Heart right ventricle (tissue), 16 donors: ENCODE measurements at regions of chr14 and their contacts with region 1.

Region 1: DNA sequence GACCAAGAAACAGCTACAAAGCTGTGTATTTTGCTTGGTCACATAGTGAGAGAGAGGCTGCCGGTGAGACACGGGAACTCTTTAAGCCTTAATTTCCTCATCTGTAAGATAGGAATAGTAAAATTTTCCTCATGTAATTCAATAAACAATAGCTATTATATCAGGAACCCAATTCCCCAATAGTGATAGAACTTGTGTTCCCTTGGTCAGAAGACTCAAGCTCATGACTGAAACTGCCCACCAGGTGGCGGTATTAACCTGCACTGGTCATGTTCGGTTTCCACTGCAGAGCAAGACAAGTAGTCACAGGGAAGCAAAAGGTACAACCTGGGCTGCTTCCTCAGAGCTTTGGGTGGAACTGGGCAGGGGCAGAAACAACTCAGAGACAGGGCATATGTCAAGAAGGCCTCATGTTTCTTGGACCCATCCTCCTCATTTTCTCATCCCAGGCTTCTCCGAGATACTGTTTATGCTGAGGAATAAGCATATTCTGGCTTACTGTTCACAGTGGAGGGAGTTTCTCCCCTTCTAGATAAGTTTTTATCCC is 4.2 kb upstream of the AJUBA start:
- DNase-seq: peak; percentile 77 to 90
- ATAC-seq: peak in 7 of 8 donors; percentile 14 to 52 (median 33)
- H3K4me3 ChIP-seq: no peak overlapping the region
- H3K27ac ChIP-seq: no peak overlapping the region
- H3K4me1 ChIP-seq: peaks cover 0 to 24% (median 14%) of the 10 kb centered on the region in 9 donors
- H3K27me3 ChIP-seq: peaks cover 0 to 7% (median 0%) of the 10 kb centered on the region in 7 donors
- CTCF ChIP-seq: peak; percentile 78 to 96 (median 92)

Region 2: GRCh38 chr14:22850944-22851764 is 135.4 kb before region 1 on chr14:
- intact Hi-C with region 1: no loop called
- DNase-seq: peak; percentile 89 to 92
- ATAC-seq: peak; percentile 77 to 92 (median 86)
- H3K4me3 ChIP-seq: no peak overlapping the region
- H3K27ac ChIP-seq: peak overlapping the region; percentile 23 to 92 (median 77)
- H3K4me1 ChIP-seq: peaks cover 19 to 73% (median 59%) of the 10 kb centered on the region in 9 donors
- H3K27me3 ChIP-seq: no peaks in the 10 kb centered on the region
- CTCF ChIP-seq: no peak

Region 3: GRCh38 chr14:23057757-23058653 is 71.4 kb after region 1 on chr14:
- intact Hi-C with region 1: loop called (anchors 1 to 5 kb)
- DNase-seq: peak; percentile 88
- ATAC-seq: peak; percentile 63 to 84 (median 80)
- H3K4me3 ChIP-seq: peak overlapping the region; percentile 48 to 91 (median 72)
- H3K27ac ChIP-seq: peak overlapping the region in 8 of 10 donors; percentile 39 to 68 (median 54)
- H3K4me1 ChIP-seq: peaks cover 5 to 41% (median 25%) of the 10 kb centered on the region in 9 donors
- H3K27me3 ChIP-seq: no peaks in the 10 kb centered on the region
- CTCF ChIP-seq: peak; percentile 94 to 98 (median 96)